Activated CD4-positive, alpha-beta T cell treated with anti-CD3 and anti-CD28 coated beads, Interleukin-2, amount 10 ng/mL, durations not matched to agents 7 days and 5 days (primary cell): ENCODE measurements at regions of chr12 and their contacts with region 1.

Region 1: DNA sequence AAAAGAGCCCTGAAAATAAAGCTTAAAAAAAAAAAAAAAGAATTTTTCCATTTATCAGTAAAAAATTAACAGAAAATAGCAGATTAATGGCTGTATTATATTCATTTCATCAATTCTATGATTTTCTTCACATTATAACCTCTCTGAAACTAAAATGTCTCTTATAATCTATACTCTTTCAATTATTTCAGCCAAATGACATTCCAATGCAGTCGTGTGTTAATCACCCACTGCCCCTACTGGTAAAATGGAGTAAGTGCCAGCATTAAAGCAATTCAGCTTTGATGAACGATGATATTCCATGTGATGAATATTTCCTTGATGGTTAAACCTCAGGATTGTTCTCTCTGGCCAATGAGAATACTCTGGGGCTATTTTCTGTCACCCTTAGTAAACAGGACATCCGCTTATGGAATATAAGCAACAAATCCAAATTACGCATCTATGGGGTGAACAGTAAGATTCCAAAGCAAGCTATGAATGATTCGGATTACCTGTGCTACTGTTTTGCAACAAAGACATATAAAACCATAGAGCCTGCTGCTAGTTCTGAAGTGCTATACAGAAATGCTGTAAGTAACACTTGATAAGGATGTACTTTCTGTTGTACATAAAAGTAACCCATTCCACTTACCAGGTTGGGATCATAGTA is 20.3 kb upstream of the SYCP3 start:
- DNase-seq: peak; percentile 24
- H3K4me3 Mint-ChIP-seq: no peak overlapping the region
- H3K27ac Mint-ChIP-seq: no peak overlapping the region
- H3K4me1 Mint-ChIP-seq: no peaks in the 10 kb centered on the region
- H3K27me3 Mint-ChIP-seq: no peaks in the 10 kb centered on the region

Region 2: GRCh38 chr12:101747697-101748096 is 11.8 kb before region 1 on chr12:
- CTCF ChIA-PET with region 1: interaction called, 10 read pairs
- POLR2A ChIA-PET with region 1: no interaction called
- DNase-seq: no peak
- H3K4me3 Mint-ChIP-seq: no peak overlapping the region
- H3K27ac Mint-ChIP-seq: no peak overlapping the region
- H3K4me1 Mint-ChIP-seq: peaks cover 14% of the 10 kb centered on the region
- H3K27me3 Mint-ChIP-seq: no peaks in the 10 kb centered on the region

Region 3: DNA sequence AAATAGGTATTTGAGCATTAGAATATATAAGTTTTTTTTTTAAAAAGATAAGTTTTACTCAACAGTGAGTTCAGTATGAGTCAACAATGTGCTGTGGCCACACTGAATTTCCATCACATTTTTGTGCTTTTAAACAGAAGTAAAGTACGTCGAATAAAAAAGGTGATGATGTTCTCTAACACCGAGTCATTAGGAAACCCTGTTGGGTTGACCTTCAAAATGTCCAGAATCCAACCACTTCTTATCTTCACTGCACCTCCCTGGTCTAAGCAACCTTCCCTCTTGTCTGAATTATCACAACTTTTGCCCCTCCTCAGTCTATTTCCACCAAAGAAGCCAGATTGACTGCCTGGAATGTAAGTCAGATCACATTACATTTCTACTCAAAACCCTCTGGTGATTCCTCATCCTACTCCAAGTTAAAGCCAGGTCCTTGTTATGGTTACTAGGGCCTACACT is 22.8 kb after region 1 on chr12:
- CTCF ChIA-PET with region 1: no interaction called
- POLR2A ChIA-PET with region 1: interaction called, 10 read pairs
- DNase-seq: no peak
- H3K4me3 Mint-ChIP-seq: no peak overlapping the region
- H3K27ac Mint-ChIP-seq: peak overlapping the region; percentile 61
- H3K4me1 Mint-ChIP-seq: peaks cover 26% of the 10 kb centered on the region
- H3K27me3 Mint-ChIP-seq: no peaks in the 10 kb centered on the region